ENCODE measurements at regions of chr18 and their contacts with region 1.

Region 1: DNA sequence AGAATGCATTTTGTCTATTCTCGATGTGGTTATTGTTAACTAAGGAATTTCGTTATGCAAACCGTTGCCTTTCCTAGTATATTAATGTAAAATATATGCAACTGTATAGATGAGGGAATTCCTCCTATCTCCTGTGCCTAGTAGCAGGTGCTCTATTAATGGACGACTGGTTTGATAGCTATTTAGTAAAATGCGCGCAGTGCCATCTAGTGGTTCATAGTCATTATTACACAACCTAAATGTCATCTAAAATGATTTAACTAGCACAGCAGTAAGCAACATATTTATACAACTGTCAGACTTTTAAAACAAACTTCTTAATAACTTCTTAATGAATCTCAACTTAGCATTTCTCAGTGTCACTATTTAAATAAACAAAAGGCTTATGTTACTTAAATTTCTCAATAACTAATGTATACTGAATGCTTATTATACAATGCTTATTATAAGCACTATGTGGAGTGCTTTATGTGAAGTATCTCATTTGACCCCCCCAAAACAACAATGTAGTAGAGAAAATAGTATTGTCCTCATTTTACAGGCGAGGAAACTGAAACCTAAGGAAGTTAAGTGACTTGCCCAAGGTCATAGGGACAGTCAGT is 77.9 kb downstream of the DTNA start:
- DNase-seq: peak in 4 of 5 donors; percentile 19 to 29 (median 24)
- H3K4me3 ChIP-seq: no peak overlapping the region
- H3K4me3 Mint-ChIP-seq: no peak overlapping the region
- H3K27ac ChIP-seq: no peak overlapping the region
- H3K27ac Mint-ChIP-seq: no peak overlapping the region
- H3K4me1 ChIP-seq: no peaks in the 10 kb centered on the region
- H3K4me1 Mint-ChIP-seq: peaks cover 0 to 4% (median 0%) of the 10 kb centered on the region in 4 donors
- H3K27me3 ChIP-seq: no peaks in the 10 kb centered on the region
- H3K27me3 Mint-ChIP-seq: peaks cover 8 to 10% of the 10 kb centered on the region in 2 donors

Region 2: DNA sequence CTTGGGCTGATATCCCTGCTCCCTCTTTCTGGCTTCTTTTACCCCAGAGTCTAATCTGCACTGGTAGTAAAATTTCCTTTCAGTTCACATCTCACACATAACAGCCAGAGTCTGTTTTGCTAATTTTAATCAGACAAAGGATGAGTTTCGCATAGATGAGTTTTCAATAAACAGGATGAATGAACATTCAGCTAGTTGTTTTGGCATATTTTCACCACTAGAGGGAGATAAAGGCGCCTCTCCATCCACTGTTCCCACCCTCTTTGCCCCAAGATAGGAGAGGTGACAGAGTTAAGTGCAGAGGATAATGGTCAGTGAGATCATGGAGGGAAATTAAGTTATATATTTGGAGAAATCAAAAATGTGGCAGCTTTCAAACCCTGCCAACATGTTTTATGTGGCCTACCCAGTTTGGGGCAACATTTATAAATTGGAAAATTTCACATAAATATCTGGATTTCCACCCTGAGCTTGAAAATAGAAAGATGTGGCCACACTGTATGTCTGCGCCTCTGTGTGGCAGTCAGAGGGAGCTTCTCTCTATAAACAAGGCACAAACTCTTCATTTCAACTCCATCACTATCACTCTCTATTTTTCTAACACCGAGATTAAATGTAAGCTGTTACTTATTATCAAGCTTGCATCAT is 126.4 kb before region 1 on chr18:
- CTCF ChIA-PET with region 1: interaction called, 7 read pairs
- POLR2A ChIA-PET with region 1: no interaction called
- intact Hi-C with region 1: loop called (anchors 2 kb)
- DNase-seq: peak in 1 of 5 donors; percentile 3
- H3K4me3 ChIP-seq: no peak overlapping the region
- H3K4me3 Mint-ChIP-seq: no peak overlapping the region
- H3K27ac ChIP-seq: no peak overlapping the region
- H3K27ac Mint-ChIP-seq: no peak overlapping the region
- H3K4me1 ChIP-seq: no peaks in the 10 kb centered on the region
- H3K4me1 Mint-ChIP-seq: no peaks in the 10 kb centered on the region
- H3K27me3 ChIP-seq: no peaks in the 10 kb centered on the region
- H3K27me3 Mint-ChIP-seq: peaks cover 0 to 4% of the 10 kb centered on the region in 2 donors

Region 3: DNA sequence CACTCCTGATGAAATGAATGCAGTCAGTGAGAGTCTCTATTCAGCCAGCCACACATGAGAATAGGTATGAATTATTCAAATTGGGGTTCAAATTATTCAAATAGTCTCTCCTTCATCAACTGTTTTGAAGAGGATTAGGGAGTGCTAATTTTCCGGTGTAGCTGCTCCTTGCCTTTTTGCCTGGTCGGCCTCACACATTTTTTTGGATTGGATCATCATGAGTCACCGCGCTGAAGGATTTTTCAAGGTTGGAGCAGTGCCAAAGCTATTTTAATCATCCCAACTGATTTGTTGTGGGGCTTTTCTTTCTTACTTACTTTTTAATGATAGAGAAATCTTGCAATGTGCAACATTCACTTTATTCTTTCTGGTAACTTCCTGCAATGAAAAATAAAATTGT is 80.4 kb before region 1 on chr18:
- CTCF ChIA-PET with region 1: no interaction called
- POLR2A ChIA-PET with region 1: no interaction called
- intact Hi-C with region 1: no loop called
- DNase-seq: no peak
- H3K4me3 ChIP-seq: no peak overlapping the region
- H3K4me3 Mint-ChIP-seq: no peak overlapping the region
- H3K27ac ChIP-seq: no peak overlapping the region
- H3K27ac Mint-ChIP-seq: no peak overlapping the region
- H3K4me1 ChIP-seq: no peaks in the 10 kb centered on the region
- H3K4me1 Mint-ChIP-seq: no peaks in the 10 kb centered on the region
- H3K27me3 ChIP-seq: no peaks in the 10 kb centered on the region
- H3K27me3 Mint-ChIP-seq: peaks cover 2 to 3% of the 10 kb centered on the region in 2 donors

Region 4: DNA sequence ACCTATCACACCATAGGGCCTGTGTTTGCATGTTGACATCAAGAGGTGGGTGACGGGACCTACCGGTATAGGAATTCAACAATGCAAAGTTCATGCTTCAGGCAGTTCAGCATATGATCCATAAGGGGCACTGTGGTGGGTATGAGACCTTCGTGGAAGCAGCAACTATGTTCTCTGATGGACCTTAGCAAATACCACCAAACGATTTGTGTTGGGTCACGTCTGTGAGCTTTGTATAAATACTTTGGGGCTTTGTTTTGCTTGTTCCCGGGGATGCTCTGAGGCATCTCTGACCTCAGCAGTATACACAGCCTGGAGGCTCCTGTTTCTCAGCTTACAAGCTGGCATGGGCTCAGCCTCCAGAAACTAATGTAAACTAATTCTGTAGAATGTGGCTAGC is 33.7 kb after region 1 on chr18:
- CTCF ChIA-PET with region 1: no interaction called
- POLR2A ChIA-PET with region 1: no interaction called
- intact Hi-C with region 1: no loop called
- DNase-seq: no peak
- H3K4me3 ChIP-seq: no peak overlapping the region
- H3K4me3 Mint-ChIP-seq: no peak overlapping the region
- H3K27ac ChIP-seq: no peak overlapping the region
- H3K27ac Mint-ChIP-seq: no peak overlapping the region
- H3K4me1 ChIP-seq: no peaks in the 10 kb centered on the region
- H3K4me1 Mint-ChIP-seq: no peaks in the 10 kb centered on the region
- H3K27me3 ChIP-seq: no peaks in the 10 kb centered on the region
- H3K27me3 Mint-ChIP-seq: peaks cover 2 to 3% of the 10 kb centered on the region in 2 donors

Measured in CD4-positive, alpha-beta memory T cell (primary cell).